Panc1 (cell line): ENCODE measurements at regions of chr17 and their contacts with region 1.

Region 1: GRCh38 chr17:15273141-15273793 is 8.1 kb upstream of the PMP22 start:
- DNase-seq: no peak
- ATAC-seq: no peak
- H3K4me3 ChIP-seq: no peak overlapping the region
- H3K27ac ChIP-seq: no peak overlapping the region
- H3K4me1 ChIP-seq: no peaks in the 10 kb centered on the region
- H3K27me3 ChIP-seq: no peaks in the 10 kb centered on the region; the same call in 1 of the 2 replicates
- CTCF ChIP-seq: no peak

Region 2: DNA sequence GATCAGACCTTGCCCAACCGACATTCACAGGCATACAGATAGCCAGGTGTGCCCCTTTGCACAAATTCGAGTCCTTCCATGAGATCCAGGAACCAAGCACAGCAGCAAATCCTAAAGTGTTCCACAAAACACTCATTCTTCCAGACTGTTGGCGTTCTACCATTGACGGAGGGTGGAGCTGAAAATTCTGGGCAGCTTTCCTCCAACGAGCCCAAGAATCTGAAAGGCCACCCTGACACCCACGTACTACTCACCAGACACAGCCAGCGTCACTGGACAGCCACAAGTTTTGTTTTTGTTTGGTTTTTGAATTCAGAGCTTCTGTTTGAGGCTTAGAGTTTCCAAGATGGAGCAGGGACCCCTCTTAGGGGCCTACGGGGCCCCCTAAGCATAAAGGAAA is 91.9 kb before region 1 on chr17:
- CTCF ChIA-PET with region 1: no interaction called
- POLR2A ChIA-PET with region 1: interaction called, 10 read pairs
- in situ Hi-C with region 1: no loop called
- intact Hi-C with region 1: no loop called
- DNase-seq: no peak
- ATAC-seq: no peak
- H3K4me3 ChIP-seq: no peak overlapping the region
- H3K27ac ChIP-seq: no peak overlapping the region
- H3K4me1 ChIP-seq: no peaks in the 10 kb centered on the region
- H3K27me3 ChIP-seq: no peaks in the 10 kb centered on the region; the same call in 1 of the 2 replicates
- CTCF ChIP-seq: no peak

Region 3: DNA sequence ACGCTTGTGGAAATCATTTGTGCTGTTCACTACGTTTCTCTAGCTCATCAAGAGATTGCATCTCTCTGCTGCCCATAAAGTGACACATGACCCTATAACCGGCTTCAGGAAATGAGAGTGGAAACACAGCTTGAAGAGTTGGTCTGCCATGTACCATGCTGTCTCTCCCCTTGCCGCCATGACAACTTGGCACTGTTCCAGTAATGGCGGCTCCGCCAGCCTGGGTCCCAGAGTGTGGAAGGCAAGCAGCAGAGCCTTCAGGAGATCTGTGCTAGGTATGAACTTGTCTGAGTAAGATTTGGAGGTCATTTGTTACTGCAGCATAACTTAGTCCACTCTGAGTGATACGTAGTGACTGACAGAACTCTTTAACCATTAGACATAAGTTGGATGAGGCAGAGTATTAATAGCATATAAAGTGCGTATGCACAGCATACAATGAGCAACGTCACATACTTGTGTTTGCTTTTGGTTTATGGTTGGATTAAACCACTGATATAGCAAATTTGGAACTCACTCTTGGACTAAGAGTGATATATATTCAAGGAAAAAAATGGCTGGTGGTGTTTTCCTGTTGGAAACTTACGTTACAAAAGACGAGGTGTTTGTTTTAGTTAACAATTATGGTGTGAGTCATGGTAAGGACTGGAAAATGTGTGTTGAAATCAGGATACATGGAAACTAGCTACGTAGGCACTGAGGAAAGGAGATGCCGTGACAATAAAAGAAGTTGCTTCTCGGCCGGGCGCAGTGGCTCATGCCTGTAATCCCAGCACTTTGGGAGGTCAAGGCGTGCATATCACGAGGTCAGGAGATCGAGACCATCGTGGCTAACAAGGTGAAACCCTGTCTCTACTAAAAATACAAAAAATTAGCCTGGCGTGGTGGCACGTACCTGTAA is 16.3 kb after region 1 on chr17:
- CTCF ChIA-PET with region 1: no interaction called
- POLR2A ChIA-PET with region 1: no interaction called
- in situ Hi-C with region 1: no loop called
- intact Hi-C with region 1: no loop called
- DNase-seq: no peak
- ATAC-seq: no peak
- H3K4me3 ChIP-seq: no peak overlapping the region
- H3K27ac ChIP-seq: no peak overlapping the region
- H3K4me1 ChIP-seq: no peaks in the 10 kb centered on the region
- H3K27me3 ChIP-seq: no peaks in the 10 kb centered on the region
- CTCF ChIP-seq: no peak